ENCODE measurements at regions of chr9 and their contacts with region 1.

Region 1: GRCh38 chr9:127943731-127944144 is 6.1 kb upstream of the DPM2 start:
- DNase-seq: peak; percentile 92
- H3K4me3 ChIP-seq: peak overlapping the region in 1 of 2 experiments; percentile 16; a peak in 1 of 4 replicates
- H3K27ac ChIP-seq: peak overlapping the region in 1 of 2 experiments; percentile 62; a peak in 1 of 4 replicates
- H3K4me1 ChIP-seq: peaks cover 0 to 50% of the 10 kb centered on the region in 2 experiments; a peak in 1 of 4 replicates
- H3K27me3 ChIP-seq: no peaks in the 10 kb centered on the region
- CTCF ChIP-seq: peak; percentile 90
- EP300 ChIP-seq: no peak
- RAD21 ChIP-seq: peak; percentile 91

Region 2: GRCh38 chr9:127537792-127538191 is 405.9 kb before region 1 on chr9:
- CTCF ChIA-PET with region 1: no interaction called
- POLR2A ChIA-PET with region 1: no interaction called
- DNase-seq: peak; percentile 59
- H3K4me3 ChIP-seq: no peak overlapping the region
- H3K27ac ChIP-seq: peak overlapping the region in 1 of 2 experiments; percentile 91; a peak in 2 of 4 replicates
- H3K4me1 ChIP-seq: peaks cover 13 to 29% of the 10 kb centered on the region in 2 experiments; a peak in 3 of 4 replicates
- H3K27me3 ChIP-seq: no peaks in the 10 kb centered on the region
- CTCF ChIP-seq: peak; percentile 36
- EP300 ChIP-seq: no peak
- RAD21 ChIP-seq: peak; percentile 57

Region 3: GRCh38 chr9:127862075-127863011 is 81.4 kb before region 1 on chr9:
- CTCF ChIA-PET with region 1: no interaction called
- POLR2A ChIA-PET with region 1: no interaction called
- DNase-seq: no peak
- H3K4me3 ChIP-seq: no peak overlapping the region
- H3K27ac ChIP-seq: no peak overlapping the region
- H3K4me1 ChIP-seq: peaks cover 0 to 18% of the 10 kb centered on the region in 2 experiments; a peak in 1 of 4 replicates
- H3K27me3 ChIP-seq: no peaks in the 10 kb centered on the region
- CTCF ChIP-seq: no peak
- EP300 ChIP-seq: no peak
- RAD21 ChIP-seq: no peak

Region 4: DNA sequence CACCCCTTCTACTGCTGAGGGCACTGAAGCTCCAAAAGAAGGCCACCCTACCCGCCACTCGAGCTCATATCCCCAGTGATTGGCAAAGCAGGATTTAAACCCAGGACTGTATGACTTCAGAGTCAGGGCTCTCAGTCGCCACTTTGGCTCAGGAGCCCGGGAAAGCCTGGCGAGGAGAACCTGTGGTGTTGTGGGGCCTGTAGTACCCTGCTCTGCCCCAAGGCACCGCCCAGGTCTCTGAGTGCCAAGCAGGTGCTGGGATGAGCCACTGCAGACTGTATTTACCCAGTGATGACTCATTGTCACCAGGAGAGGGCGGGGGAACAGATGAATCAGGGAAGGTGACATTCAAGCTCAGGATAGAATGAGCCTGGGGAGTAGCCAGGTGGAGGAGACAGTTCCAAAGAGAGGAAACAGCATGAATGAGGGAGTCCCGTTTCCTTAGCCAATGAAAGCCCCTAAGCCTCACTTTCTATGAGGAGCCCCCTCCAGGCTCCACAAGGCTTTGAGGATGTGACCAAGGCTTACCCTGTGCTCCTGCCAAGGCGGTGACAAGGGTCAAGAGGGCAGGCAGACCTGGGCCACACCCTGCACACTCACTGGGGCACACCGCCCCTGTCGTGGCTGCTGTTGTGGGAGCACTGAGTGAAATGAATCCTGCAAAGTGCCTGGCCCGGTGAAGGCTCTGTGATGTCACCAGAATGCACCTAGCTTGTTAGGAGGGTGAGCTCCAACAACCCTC is 11.7 kb after region 1 on chr9:
- CTCF ChIA-PET with region 1: interaction called, 106 read pairs
- POLR2A ChIA-PET with region 1: interaction called, 3 read pairs
- DNase-seq: peak; percentile 79
- H3K4me3 ChIP-seq: no peak overlapping the region
- H3K27ac ChIP-seq: peak overlapping the region in 1 of 2 experiments; percentile 54; a peak in 1 of 4 replicates
- H3K4me1 ChIP-seq: peaks cover 0 to 46% of the 10 kb centered on the region in 2 experiments; a peak in 2 of 4 replicates
- H3K27me3 ChIP-seq: no peaks in the 10 kb centered on the region
- CTCF ChIP-seq: no peak
- EP300 ChIP-seq: no peak
- RAD21 ChIP-seq: peak; percentile 59

Region 5: GRCh38 chr9:127970401-127971313 is 26.9 kb after region 1 on chr9:
- CTCF ChIA-PET with region 1: interaction called, 75 read pairs
- POLR2A ChIA-PET with region 1: interaction called, 5 read pairs
- DNase-seq: peak; percentile 10
- H3K4me3 ChIP-seq: no peak overlapping the region; a peak in 1 of 4 replicates
- H3K27ac ChIP-seq: peak overlapping the region; percentile 91 to 93
- H3K4me1 ChIP-seq: peaks cover 92 to 100% of the 10 kb centered on the region in 2 experiments
- H3K27me3 ChIP-seq: no peaks in the 10 kb centered on the region
- CTCF ChIP-seq: no peak
- EP300 ChIP-seq: no peak
- RAD21 ChIP-seq: no peak

Region 6: GRCh38 chr9:128001779-128002298 is 58.1 kb after region 1 on chr9:
- CTCF ChIA-PET with region 1: interaction called, 19 read pairs
- POLR2A ChIA-PET with region 1: no interaction called
- DNase-seq: peak; percentile 72
- H3K4me3 ChIP-seq: no peak overlapping the region
- H3K27ac ChIP-seq: peak overlapping the region; percentile 75 to 87
- H3K4me1 ChIP-seq: peaks cover 12 to 33% of the 10 kb centered on the region in 2 experiments
- H3K27me3 ChIP-seq: no peaks in the 10 kb centered on the region
- CTCF ChIP-seq: no peak
- EP300 ChIP-seq: peak; percentile 28 to 71; a peak in 2 of 4 replicates
- RAD21 ChIP-seq: no peak; the same call in 1 of the 2 replicates

Region 7: DNA sequence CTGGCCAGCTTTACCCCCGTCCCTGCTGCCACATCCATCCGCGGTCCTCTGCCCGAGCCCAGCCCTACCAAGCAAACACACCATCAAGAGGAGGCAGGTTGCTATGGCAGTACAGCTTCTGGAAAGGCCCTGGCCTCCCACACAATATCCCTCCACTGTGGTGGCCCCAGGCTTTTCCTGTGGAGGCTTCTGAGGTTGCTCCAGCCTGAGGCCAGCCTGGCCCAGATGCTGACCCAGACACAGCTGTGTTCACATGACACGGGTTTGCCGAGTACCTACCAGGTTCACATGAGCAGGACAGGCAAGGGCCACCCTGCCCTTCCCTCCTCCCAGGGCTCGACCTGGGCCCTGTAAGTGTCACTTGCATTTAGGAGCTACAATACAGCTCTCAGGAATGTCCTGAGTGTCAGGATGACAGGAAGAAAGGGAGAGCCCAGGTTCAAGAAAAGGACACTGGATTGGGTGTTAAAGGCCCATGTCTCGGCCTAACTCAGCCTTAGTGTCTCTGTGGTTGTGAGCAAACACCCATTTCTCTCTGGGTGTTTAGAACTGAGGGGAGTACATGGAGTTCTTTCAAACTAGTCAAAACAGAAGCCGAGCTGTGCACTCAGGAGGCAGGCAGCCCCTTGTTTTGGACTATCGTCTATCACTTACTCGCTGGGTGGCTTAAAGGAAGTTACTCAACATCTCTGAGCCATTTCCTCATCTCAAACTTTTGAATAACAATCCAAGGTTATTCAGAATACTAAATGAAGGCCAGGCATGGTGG is 83.2 kb after region 1 on chr9:
- CTCF ChIA-PET with region 1: interaction called, 219 read pairs
- POLR2A ChIA-PET with region 1: no interaction called
- DNase-seq: peak; percentile 39
- H3K4me3 ChIP-seq: no peak overlapping the region
- H3K27ac ChIP-seq: peak overlapping the region in 1 of 2 experiments; percentile 14; a peak in 1 of 4 replicates
- H3K4me1 ChIP-seq: peaks cover 3 to 10% of the 10 kb centered on the region in 2 experiments; a peak in 2 of 4 replicates
- H3K27me3 ChIP-seq: no peaks in the 10 kb centered on the region
- CTCF ChIP-seq: no peak
- EP300 ChIP-seq: no peak
- RAD21 ChIP-seq: no peak

Region 8: GRCh38 chr9:128067876-128068613 is 124.3 kb after region 1 on chr9 and contains the start of gene SLC25A25:
- CTCF ChIA-PET with region 1: interaction called, 18 read pairs
- POLR2A ChIA-PET with region 1: no interaction called
- DNase-seq: peak; percentile 99
- H3K4me3 ChIP-seq: peak within 1 kb of the TSS; percentile 81 to 84
- H3K27ac ChIP-seq: peak within 1 kb of the TSS; percentile 99
- H3K4me1 ChIP-seq: peaks cover 22 to 27% of the 10 kb centered on the region in 2 experiments
- H3K27me3 ChIP-seq: no peaks in the 10 kb centered on the region
- CTCF ChIP-seq: no peak
- EP300 ChIP-seq: no peak
- RAD21 ChIP-seq: no peak
- polyA plus RNA-seq, gene SLC25A25: 12.1 and 12.3 TPM in 2 replicates

Measured in SK-N-SH (cell line).